A549 (cell line): ENCODE measurements at regions of chr4 and their contacts with region 1.

Region 1: GRCh38 chr4:40719008-40719623 is 30.6 kb upstream of the NSUN7 start:
- DNase-seq: peak; percentile 46 to 82
- ATAC-seq: peak; percentile 93 to 94
- H3K4me3 ChIP-seq: no peak overlapping the region
- H3K27ac ChIP-seq: peak overlapping the region; percentile 54 to 65
- H3K4me1 ChIP-seq: peaks cover 29% of the 10 kb centered on the region
- CTCF ChIP-seq: peak; percentile 80
- EP300 ChIP-seq: no peak
- POLR2A ChIP-seq: no peak
- RAD21 ChIP-seq: peak; percentile 89 to 94

Region 2: GRCh38 chr4:40550948-40551462 is 168.1 kb before region 1 on chr4:
- CTCF ChIA-PET with region 1: interaction called, 10 read pairs
- POLR2A ChIA-PET with region 1: no interaction called
- DNase-seq: peak; percentile 25 to 50
- ATAC-seq: peak; percentile 69 to 78; a peak in 5 of 6 replicates
- H3K4me3 ChIP-seq: 0 out of 3 replicates have a peak overlapping the region, but pooled peaks have one; percentile 4
- H3K27ac ChIP-seq: peak overlapping the region; percentile 64 to 80
- H3K4me1 ChIP-seq: peaks cover 51% of the 10 kb centered on the region
- CTCF ChIP-seq: peak; percentile 36; the same call in 2 of the 3 replicates
- EP300 ChIP-seq: no peak
- POLR2A ChIP-seq: no peak
- RAD21 ChIP-seq: peak; percentile 50 to 60

Region 3: DNA sequence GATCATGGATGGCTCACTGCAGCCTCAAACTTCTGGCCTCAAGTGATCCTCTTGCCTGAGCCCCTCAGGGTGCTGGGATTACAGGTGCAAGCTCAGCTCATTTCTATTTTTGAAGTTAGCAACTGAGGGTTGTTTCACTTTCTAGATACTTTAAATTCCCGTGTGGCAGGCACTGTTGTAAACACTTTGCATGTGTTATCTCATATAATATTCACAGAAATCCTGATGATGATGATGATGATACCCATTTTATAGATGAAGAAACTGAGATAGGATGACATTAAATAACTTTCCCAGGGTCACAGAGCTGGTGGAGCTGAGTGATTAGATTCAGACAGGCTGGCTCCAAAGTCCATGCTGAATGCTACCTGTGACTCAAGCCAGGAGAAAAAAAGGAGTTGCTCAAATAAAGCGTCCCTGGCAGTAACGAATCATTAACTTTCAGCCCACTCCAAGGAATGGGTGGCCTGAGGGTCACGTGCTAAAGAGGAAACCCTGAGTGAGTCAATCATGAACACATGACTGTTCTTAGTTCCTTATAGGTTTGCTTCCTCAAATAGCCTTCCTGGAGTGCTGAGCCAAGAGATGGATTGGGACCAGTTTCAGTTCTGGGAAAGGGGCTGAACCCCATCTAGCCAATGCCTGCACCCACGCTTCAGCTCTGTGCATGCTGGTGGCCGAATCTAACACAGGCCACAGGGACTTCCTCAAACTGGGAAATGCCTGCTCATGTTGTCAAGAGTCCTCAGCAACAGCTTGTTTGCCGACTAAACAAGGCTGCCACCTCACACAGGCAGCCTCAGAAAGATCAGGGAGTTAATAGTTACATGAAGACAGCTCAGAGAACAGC is 142.3 kb before region 1 on chr4:
- CTCF ChIA-PET with region 1: interaction called, 12 read pairs
- POLR2A ChIA-PET with region 1: no interaction called
- DNase-seq: peak; percentile 85 to 98
- ATAC-seq: peak; percentile 97
- H3K4me3 ChIP-seq: no peak overlapping the region; the same call in 2 of the 3 replicates
- H3K27ac ChIP-seq: peak overlapping the region; percentile 84 to 86
- H3K4me1 ChIP-seq: peaks cover 60% of the 10 kb centered on the region
- CTCF ChIP-seq: no peak
- EP300 ChIP-seq: peak in 1 of 2 experiments; percentile 61; a peak in 2 of 5 replicates
- POLR2A ChIP-seq: no peak
- RAD21 ChIP-seq: no peak; a peak in 1 of 5 replicates